Kidney (tissue), 22 donors: ENCODE measurements at regions of chr11 and their contacts with region 1.

Region 1: GRCh38 chr11:111422494-111423249 is 43.6 kb upstream of the POU2AF1 start:
- DNase-seq: peak in 4 of 5 donors; percentile 78 to 81 (median 81)
- H3K4me3 ChIP-seq: no peak overlapping the region
- H3K27ac ChIP-seq: no peak overlapping the region
- H3K4me1 ChIP-seq: peaks cover 2 to 12% (median 11%) of the 10 kb centered on the region in 3 donors
- H3K27me3 ChIP-seq: no peaks in the 10 kb centered on the region
- CTCF ChIP-seq: peak; percentile 77

Region 2: GRCh38 chr11:111123463-111124398 is 298.9 kb before region 1 on chr11:
- intact Hi-C with region 1: no loop called
- DNase-seq: no peak
- H3K4me3 ChIP-seq: no peak overlapping the region
- H3K27ac ChIP-seq: no peak overlapping the region
- H3K4me1 ChIP-seq: no peaks in the 10 kb centered on the region
- H3K27me3 ChIP-seq: no peaks in the 10 kb centered on the region
- CTCF ChIP-seq: no peak

Region 3: DNA sequence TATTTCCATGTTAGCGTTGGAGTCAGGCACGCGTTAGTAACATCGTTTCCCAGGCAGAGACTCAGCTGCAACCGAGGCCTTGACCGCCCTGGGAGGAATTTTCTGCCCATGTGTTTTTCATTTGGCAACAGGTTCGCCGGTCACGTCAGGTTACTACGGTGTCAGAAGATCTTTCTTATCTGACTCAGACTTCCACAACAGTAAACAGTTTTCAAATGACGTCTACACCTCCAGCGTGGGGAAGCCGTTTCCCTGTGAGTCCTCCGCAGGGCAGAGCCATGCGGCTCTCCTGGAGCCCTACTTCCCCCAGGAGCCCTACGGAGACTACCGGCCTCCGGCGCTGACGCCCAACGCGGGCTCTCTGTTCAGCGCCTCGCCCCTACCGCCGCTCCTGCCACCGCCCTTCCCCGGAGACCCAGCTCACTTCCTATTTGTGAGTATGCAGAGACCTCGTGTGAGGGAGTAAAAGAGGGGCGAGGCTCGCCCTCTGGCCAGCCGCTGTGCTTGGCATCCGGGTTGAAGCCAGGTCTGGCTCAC is 138.7 kb before region 1 on chr11:
- intact Hi-C with region 1: loop called (anchors 5 kb)
- DNase-seq: peak in 1 of 5 donors; percentile 67
- H3K4me3 ChIP-seq: no peak overlapping the region
- H3K27ac ChIP-seq: no peak overlapping the region
- H3K4me1 ChIP-seq: no peaks in the 10 kb centered on the region
- H3K27me3 ChIP-seq: no peaks in the 10 kb centered on the region
- CTCF ChIP-seq: no peak

Region 4: DNA sequence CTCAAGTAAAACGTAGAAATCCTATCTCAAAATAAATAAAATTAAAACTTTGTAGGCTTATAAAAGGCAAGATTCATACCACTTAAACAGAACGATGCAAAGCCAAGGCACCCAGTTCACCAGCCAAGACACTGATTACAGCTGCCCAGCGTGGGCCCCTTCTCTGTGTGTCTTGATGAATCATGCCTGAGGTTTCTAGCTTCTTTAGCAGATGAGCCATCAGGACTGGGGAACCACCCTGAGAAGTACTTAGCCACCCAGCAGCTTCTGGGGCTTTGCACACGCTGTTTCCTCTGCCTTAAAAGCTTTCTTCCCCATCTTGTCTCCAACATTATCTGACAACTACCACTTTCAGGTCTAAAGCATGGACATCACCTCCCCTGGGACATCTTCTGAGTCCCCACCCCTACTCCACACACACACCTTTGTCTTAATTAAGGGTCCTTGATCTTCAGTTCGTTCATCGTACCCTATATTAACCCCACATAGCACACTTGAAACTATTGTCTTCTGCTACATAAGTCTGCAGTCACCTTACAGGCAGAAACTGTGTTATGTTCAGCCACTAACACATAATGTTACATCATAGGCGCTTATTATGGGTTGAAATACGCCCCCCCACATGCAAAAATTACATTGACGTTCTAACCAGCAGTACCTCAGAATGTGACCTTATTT is 109.2 kb after region 1 on chr11:
- intact Hi-C with region 1: no loop called
- DNase-seq: no peak
- H3K4me3 ChIP-seq: no peak overlapping the region
- H3K27ac ChIP-seq: no peak overlapping the region
- H3K4me1 ChIP-seq: no peaks in the 10 kb centered on the region
- H3K27me3 ChIP-seq: no peaks in the 10 kb centered on the region
- CTCF ChIP-seq: no peak